Activated CD4-positive, alpha-beta T cell treated with anti-CD3 and anti-CD28 coated beads, Interleukin-2, amount 10 ng/mL, durations not matched to agents 7 days and 5 days (primary cell): ENCODE measurements at regions of chr9 and their contacts with region 1.

Region 1: GRCh38 chr9:89743573-89744361 is 139.0 kb downstream of the GADD45G start:
- DNase-seq: peak; percentile 89
- H3K4me3 Mint-ChIP-seq: peak overlapping the region; percentile 53
- H3K27ac Mint-ChIP-seq: peak overlapping the region; percentile 92
- H3K4me1 Mint-ChIP-seq: peaks cover 86% of the 10 kb centered on the region
- H3K27me3 Mint-ChIP-seq: no peaks in the 10 kb centered on the region

Region 2: DNA sequence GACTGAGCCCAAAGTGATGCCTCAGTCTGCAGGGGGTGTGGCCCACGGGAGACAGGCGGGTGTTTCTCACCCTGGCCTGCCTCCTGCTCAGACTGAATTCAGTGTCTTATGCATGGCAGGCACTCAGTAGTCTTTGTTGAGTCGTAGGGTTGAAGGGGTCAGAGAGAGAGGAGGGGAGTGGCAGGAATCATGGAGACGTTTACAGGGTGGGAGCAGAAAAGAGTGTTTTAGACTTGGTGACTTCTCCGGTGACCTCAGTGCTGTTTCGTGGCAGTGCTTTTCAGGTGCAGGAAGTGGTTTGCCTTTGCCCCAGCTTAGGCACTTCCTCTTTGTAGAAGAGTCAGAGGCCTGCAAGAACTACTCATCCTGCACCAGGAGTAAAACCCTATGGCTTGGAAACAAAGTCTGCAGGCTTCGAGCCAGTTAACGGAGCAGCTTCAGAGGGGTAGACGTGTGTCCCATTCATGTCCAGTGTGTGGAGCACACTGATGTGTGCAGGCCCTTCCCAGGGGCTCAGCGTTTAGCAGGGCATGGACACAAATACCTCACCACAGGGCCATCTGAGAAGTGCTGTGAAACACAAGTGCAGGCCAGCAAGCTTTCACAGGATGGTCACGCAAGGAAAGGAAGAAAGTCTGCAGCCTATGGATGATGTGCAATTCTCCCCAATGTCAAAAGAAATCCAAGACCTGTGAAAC is 221.4 kb before region 1 on chr9:
- CTCF ChIA-PET with region 1: no interaction called
- POLR2A ChIA-PET with region 1: no interaction called
- DNase-seq: peak; percentile 89
- H3K4me3 Mint-ChIP-seq: peak overlapping the region; percentile 43
- H3K27ac Mint-ChIP-seq: peak overlapping the region; percentile 93
- H3K4me1 Mint-ChIP-seq: peaks cover 96% of the 10 kb centered on the region
- H3K27me3 Mint-ChIP-seq: no peaks in the 10 kb centered on the region

Region 3: GRCh38 chr9:89729895-89730530 is 13.8 kb before region 1 on chr9:
- CTCF ChIA-PET with region 1: interaction called, 15 read pairs
- POLR2A ChIA-PET with region 1: interaction called, 3 read pairs
- DNase-seq: no peak
- H3K4me3 Mint-ChIP-seq: no peak overlapping the region
- H3K27ac Mint-ChIP-seq: no peak overlapping the region
- H3K4me1 Mint-ChIP-seq: peaks cover 6% of the 10 kb centered on the region
- H3K27me3 Mint-ChIP-seq: peaks cover 4% of the 10 kb centered on the region